K562 (cell line): ENCODE measurements at regions of chr5 and their contacts with region 1.

Region 1: DNA sequence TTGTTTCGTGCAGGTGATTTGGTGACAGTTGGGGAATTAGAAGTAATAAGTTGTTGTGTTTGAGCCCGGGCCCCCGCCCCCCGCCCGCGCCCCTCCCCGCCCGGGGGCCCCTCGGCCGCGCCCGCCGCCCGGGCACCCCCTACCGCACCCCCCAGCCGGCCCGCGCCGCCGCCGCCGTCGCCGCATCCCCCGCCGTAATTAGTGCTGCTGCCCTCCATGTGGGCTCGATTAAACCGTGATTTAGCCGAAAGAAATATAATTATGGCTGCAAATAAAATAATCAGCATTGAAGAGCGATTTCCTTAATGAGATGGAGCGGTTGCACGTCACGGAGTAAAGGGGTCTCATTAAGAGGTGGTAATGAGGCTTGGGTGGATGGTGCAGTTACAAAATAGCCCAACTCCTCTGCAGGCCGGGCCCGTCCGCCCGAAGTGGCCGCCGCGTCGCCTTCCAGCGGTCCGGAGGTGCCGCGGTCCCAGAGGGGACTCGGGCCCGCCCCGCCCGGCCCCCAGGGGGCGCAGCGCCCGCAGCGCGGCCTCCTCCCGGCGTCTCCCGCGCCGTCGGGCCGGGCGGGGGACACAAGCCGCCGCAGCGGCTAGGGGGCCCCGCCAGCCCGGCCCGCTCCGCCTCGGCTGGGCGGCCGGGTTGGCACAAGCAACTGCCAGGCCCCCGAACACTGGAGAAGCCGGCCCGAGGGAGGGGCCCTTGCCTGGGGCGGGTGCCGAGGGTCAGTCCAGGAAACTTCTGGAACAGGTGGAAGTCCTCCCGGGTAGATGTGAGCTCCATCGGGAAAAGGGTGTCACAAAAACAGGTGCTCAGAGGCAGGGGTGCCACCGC is 6.9 kb upstream of the OTP start:
- DNase-seq: peak; percentile 73 to 90 (median 86)
- ATAC-seq: peak; percentile 100
- H3K4me3 ChIP-seq: peak overlapping the region; percentile 49
- H3K27ac ChIP-seq: no peak overlapping the region
- H3K4me1 ChIP-seq: peaks cover 0 to 24% of the 10 kb centered on the region in 2 experiments; a peak in 2 of 5 replicates
- H3K27me3 ChIP-seq: peaks cover 30 to 49% of the 10 kb centered on the region in 2 experiments; a peak in 4 of 5 replicates
- CTCF ChIP-seq: peak; percentile 41 to 76 (median 58)
- EP300 ChIP-seq: no peak
- POLR2A ChIP-seq: no peak
- RAD21 ChIP-seq: peak; percentile 28 to 74; a peak in 3 of 4 replicates

Region 2: DNA sequence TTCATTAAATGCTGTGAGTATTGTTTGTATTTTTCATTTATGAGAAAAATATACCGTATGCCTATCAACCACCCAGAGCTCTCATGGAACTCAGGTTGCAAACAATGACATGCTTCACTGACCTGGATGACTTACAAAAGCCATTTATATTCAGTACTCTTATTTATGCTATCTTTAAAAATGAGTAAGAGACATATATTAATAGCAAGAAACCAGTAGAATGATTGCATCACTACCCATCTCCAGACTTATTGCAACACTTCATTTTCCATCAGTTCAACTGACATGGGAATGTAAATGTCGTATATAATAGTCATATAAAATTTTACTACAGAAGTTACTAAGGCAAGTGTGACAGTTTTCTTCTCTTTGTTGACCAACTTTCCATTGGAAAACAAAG is 76.0 kb before region 1 on chr5:
- CTCF ChIA-PET with region 1: no interaction called
- POLR2A ChIA-PET with region 1: interaction called, 3 read pairs
- in situ Hi-C with region 1: no loop called
- intact Hi-C with region 1: loop called (anchors 10 kb)
- DNase-seq: no peak
- ATAC-seq: no peak
- H3K4me3 ChIP-seq: no peak overlapping the region
- H3K27ac ChIP-seq: no peak overlapping the region
- H3K4me1 ChIP-seq: no peaks in the 10 kb centered on the region
- H3K27me3 ChIP-seq: peaks cover 0 to 5% of the 10 kb centered on the region in 2 experiments; a peak in 1 of 5 replicates
- CTCF ChIP-seq: no peak
- EP300 ChIP-seq: no peak
- POLR2A ChIP-seq: no peak
- RAD21 ChIP-seq: no peak

Region 3: GRCh38 chr5:77981818-77982217 is 336.4 kb after region 1 on chr5:
- CTCF ChIA-PET with region 1: interaction called, 3 read pairs
- POLR2A ChIA-PET with region 1: interaction called, 4 read pairs
- in situ Hi-C with region 1: no loop called
- intact Hi-C with region 1: loop called (anchors 10 kb)
- DNase-seq: no peak
- ATAC-seq: peak; percentile 69
- H3K4me3 ChIP-seq: no peak overlapping the region
- H3K27ac ChIP-seq: no peak overlapping the region
- H3K4me1 ChIP-seq: peaks cover 0 to 3% of the 10 kb centered on the region in 2 experiments; a peak in 1 of 5 replicates
- H3K27me3 ChIP-seq: peaks cover 9 to 21% of the 10 kb centered on the region in 2 experiments
- CTCF ChIP-seq: peak; percentile 19 to 39 (median 29); a peak in 2 of 6 replicates
- EP300 ChIP-seq: no peak
- POLR2A ChIP-seq: no peak
- RAD21 ChIP-seq: peak; percentile 58 to 76

Region 4: GRCh38 chr5:78116167-78116566 is 470.8 kb after region 1 on chr5:
- CTCF ChIA-PET with region 1: no interaction called
- POLR2A ChIA-PET with region 1: no interaction called
- in situ Hi-C with region 1: no loop called
- intact Hi-C with region 1: no loop called
- DNase-seq: no peak
- ATAC-seq: no peak
- H3K4me3 ChIP-seq: no peak overlapping the region
- H3K27ac ChIP-seq: no peak overlapping the region
- H3K4me1 ChIP-seq: no peaks in the 10 kb centered on the region
- H3K27me3 ChIP-seq: no peaks in the 10 kb centered on the region
- CTCF ChIP-seq: no peak
- EP300 ChIP-seq: no peak
- POLR2A ChIP-seq: no peak
- RAD21 ChIP-seq: no peak